CD4-positive, alpha-beta memory T cell (primary cell): ENCODE measurements at regions of chr12 and their contacts with region 1.

Region 1: GRCh38 chr12:91382081-91382543 is 199.5 kb upstream of the DCN start:
- DNase-seq: peak; percentile 72 to 79 (median 78)
- H3K4me3 ChIP-seq: no peak overlapping the region
- H3K4me3 Mint-ChIP-seq: peak overlapping the region; percentile 46 to 79 (median 63)
- H3K27ac ChIP-seq: no peak overlapping the region
- H3K27ac Mint-ChIP-seq: peak overlapping the region in 2 of 7 donors; percentile 23 to 31
- H3K4me1 ChIP-seq: peaks cover 7% of the 10 kb centered on the region
- H3K4me1 Mint-ChIP-seq: peaks cover 2 to 5% (median 5%) of the 10 kb centered on the region in 4 donors
- H3K27me3 ChIP-seq: no peaks in the 10 kb centered on the region
- H3K27me3 Mint-ChIP-seq: peaks cover 3 to 6% of the 10 kb centered on the region in 2 donors

Region 2: GRCh38 chr12:91400271-91400670 is 18.2 kb after region 1 on chr12:
- CTCF ChIA-PET with region 1: interaction called, 12 read pairs
- POLR2A ChIA-PET with region 1: no interaction called
- intact Hi-C with region 1: no loop called
- DNase-seq: no peak
- H3K4me3 ChIP-seq: no peak overlapping the region
- H3K4me3 Mint-ChIP-seq: no peak overlapping the region
- H3K27ac ChIP-seq: no peak overlapping the region
- H3K27ac Mint-ChIP-seq: no peak overlapping the region
- H3K4me1 ChIP-seq: no peaks in the 10 kb centered on the region
- H3K4me1 Mint-ChIP-seq: no peaks in the 10 kb centered on the region
- H3K27me3 ChIP-seq: no peaks in the 10 kb centered on the region
- H3K27me3 Mint-ChIP-seq: no peaks in the 10 kb centered on the region

Region 3: DNA sequence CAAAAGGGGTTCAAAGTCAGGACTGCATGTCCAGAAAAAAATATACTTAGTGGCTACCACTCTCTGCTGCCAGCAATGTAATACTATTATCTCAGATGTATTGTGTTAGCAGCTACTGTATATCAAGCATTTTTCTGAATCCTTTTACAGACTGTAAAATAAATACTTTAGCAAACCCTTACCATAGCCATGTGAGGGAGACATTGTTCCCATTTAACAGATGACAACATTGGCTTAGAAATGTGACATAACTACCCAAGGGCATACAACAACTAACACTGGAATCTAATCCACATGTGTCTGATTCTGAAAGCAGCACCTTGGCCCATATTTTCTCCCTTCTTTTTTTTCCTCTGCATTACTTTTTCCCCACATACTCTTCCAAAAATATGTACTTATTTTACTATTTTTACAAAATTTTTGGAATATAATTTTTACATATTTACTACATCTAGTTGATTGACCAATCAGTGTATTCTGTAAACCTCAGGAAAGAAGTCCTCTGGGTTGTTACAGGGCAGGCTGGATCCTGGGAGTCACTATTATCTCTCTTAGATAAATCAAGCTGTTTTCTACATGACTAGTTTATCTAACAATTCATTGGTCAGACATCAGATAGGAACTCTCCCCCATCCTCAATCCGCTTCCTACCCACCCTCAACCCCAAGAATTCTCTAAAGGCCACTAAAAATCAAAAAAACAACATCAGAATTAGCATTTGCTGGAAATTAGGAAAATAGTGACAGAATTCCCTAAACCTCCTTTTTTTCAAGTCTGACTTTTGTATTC is 609.5 kb after region 1 on chr12:
- CTCF ChIA-PET with region 1: interaction called, 9 read pairs
- POLR2A ChIA-PET with region 1: no interaction called
- intact Hi-C with region 1: loop called (anchors 5 kb)
- DNase-seq: peak in 4 of 5 donors; percentile 51 to 67 (median 54)
- H3K4me3 ChIP-seq: no peak overlapping the region
- H3K4me3 Mint-ChIP-seq: no peak overlapping the region
- H3K27ac ChIP-seq: no peak overlapping the region
- H3K27ac Mint-ChIP-seq: peak overlapping the region in 5 of 7 donors; percentile 22 to 85 (median 70)
- H3K4me1 ChIP-seq: peaks cover 27% of the 10 kb centered on the region
- H3K4me1 Mint-ChIP-seq: peaks cover 18 to 37% (median 28%) of the 10 kb centered on the region in 4 donors
- H3K27me3 ChIP-seq: no peaks in the 10 kb centered on the region
- H3K27me3 Mint-ChIP-seq: no peaks in the 10 kb centered on the region

Region 4: DNA sequence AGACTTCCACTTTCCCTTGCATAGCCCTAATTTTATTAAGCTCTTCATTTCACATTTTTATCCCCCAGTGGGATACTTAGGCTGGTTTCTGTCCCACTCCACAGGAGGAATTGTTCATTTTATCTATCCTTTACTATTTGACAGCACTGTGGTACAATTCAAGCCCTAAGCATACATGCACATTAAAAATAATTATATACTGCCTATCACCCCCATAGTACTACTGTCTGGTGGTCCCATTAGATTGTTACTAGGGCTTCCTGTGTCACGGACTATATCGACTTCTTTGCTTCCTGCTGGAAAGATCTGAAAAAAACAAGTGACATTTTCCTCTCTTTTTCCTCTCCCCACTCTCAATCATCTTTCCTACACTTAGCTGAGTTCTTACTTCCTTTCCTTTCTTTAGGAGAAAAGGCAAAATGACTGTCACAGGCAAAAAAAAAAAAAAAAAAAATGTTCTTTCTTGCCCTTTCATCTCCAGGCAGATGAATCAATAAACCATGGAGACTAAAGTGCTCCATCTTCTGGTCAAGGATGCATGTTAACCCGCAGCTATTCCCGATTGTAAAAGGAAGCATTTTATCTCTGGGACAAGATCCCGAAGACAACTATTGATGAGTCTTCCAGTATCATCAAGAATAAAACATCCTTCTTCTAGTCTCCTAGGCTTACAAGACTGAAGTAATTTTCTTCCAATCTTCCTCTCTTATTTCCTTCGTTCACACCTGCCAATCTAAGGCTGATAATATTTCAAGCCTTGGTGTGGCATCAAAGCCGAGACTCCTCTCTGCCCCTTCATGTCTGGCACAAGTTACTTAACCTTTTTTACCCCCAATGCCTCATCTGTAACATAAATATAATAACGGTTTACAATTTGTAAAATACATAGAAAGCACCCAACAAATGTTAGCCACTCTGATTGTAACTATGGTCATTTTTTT is 1226.3 kb after region 1 on chr12:
- CTCF ChIA-PET with region 1: interaction called, 22 read pairs
- POLR2A ChIA-PET with region 1: no interaction called
- intact Hi-C with region 1: loop called (anchors 1 kb)
- DNase-seq: peak in 2 of 5 donors; percentile 4 to 27
- H3K4me3 ChIP-seq: no peak overlapping the region
- H3K4me3 Mint-ChIP-seq: peak overlapping the region in 5 of 8 donors; percentile 22 to 64 (median 41)
- H3K27ac ChIP-seq: no peak overlapping the region
- H3K27ac Mint-ChIP-seq: peak overlapping the region in 6 of 7 donors; percentile 4 to 88 (median 71)
- H3K4me1 ChIP-seq: peaks cover 8% of the 10 kb centered on the region
- H3K4me1 Mint-ChIP-seq: peaks cover 10 to 11% (median 10%) of the 10 kb centered on the region in 4 donors
- H3K27me3 ChIP-seq: no peaks in the 10 kb centered on the region
- H3K27me3 Mint-ChIP-seq: no peaks in the 10 kb centered on the region

Region 5: GRCh38 chr12:92654929-92655328 is 1272.8 kb after region 1 on chr12:
- CTCF ChIA-PET with region 1: interaction called, 65 read pairs
- POLR2A ChIA-PET with region 1: interaction called, 3 read pairs
- intact Hi-C with region 1: loop called (anchors 1 kb)
- DNase-seq: no peak
- H3K4me3 ChIP-seq: no peak overlapping the region
- H3K4me3 Mint-ChIP-seq: no peak overlapping the region
- H3K27ac ChIP-seq: no peak overlapping the region
- H3K27ac Mint-ChIP-seq: no peak overlapping the region
- H3K4me1 ChIP-seq: no peaks in the 10 kb centered on the region
- H3K4me1 Mint-ChIP-seq: peaks cover 0 to 3% (median 2%) of the 10 kb centered on the region in 4 donors
- H3K27me3 ChIP-seq: no peaks in the 10 kb centered on the region
- H3K27me3 Mint-ChIP-seq: peaks cover 2% of the 10 kb centered on the region in 2 donors